ENCODE measurements at regions of chr16 and their contacts with region 1.

Region 1: DNA sequence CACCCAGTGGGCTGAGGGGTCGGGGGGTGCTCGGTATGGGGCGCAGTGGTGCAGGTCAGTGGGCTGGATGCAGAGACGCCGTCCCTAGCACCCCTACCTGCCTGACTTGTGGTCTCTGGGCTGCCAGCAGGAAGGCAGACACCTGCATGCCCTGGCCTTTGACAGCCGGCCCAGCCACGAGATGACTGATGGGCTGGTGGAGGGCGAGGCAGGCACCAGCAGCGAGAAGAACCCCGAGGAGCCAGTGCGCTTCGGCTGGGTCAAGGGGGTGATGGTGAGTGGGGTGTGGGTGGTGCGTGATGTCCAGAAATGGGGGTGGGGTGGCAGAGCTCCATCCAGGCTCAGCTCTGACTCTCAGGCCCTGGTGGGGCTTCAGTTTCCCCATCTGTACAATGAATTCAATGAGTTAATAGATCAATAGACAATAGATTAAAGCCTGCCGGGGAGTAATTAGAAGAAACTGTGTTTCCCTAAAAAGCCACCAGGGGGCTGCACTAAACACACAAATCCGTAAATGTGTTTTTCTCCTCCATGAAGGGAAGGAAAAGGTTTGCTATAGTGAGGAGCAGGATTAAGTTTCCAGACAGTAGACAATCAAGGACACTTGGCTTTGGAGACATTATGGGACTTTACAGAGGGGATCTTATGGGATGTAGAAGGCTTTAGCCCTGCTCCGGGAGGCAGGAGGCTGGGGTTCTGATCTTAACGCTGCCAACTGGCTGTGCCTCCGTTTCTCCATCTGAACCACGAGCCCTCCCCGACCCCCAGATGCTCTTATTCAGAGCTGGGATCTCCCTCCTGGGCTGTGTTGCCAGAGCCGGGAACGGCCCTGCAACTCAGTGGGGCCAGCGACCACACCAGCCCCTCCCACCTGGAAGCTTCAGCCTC is 2.2 kb downstream of the SLC12A3 start:
- DNase-seq: peak; percentile 54
- H3K4me3 ChIP-seq: no peak overlapping the region
- H3K27ac ChIP-seq: no peak overlapping the region
- H3K4me1 ChIP-seq: no peaks in the 10 kb centered on the region
- H3K27me3 ChIP-seq: no peaks in the 10 kb centered on the region
- CTCF ChIP-seq: peak; percentile 79

Region 2: GRCh38 chr16:56505181-56505580 is 362.0 kb before region 1 on chr16:
- intact Hi-C with region 1: no loop called
- DNase-seq: no peak
- H3K4me3 ChIP-seq: no peak overlapping the region
- H3K27ac ChIP-seq: no peak overlapping the region
- H3K4me1 ChIP-seq: no peaks in the 10 kb centered on the region
- H3K27me3 ChIP-seq: no peaks in the 10 kb centered on the region
- CTCF ChIP-seq: no peak

Region 3: GRCh38 chr16:56950881-56951771 is 83.9 kb after region 1 on chr16:
- intact Hi-C with region 1: loop called (anchors 2 kb)
- DNase-seq: peak; percentile 37
- H3K4me3 ChIP-seq: no peak overlapping the region
- H3K27ac ChIP-seq: no peak overlapping the region
- H3K4me1 ChIP-seq: no peaks in the 10 kb centered on the region
- H3K27me3 ChIP-seq: no peaks in the 10 kb centered on the region
- CTCF ChIP-seq: peak; percentile 57

Region 4: GRCh38 chr16:57042157-57043111 is 175.2 kb after region 1 on chr16:
- intact Hi-C with region 1: loop called (anchors 10 kb)
- DNase-seq: no peak
- H3K4me3 ChIP-seq: no peak overlapping the region
- H3K27ac ChIP-seq: peak overlapping the region; percentile 31
- H3K4me1 ChIP-seq: no peaks in the 10 kb centered on the region
- H3K27me3 ChIP-seq: no peaks in the 10 kb centered on the region
- CTCF ChIP-seq: no peak

Measured in colonic mucosa (tissue), 4 donors.